ENCODE measurements at regions of chr10 and their contacts with region 1.

Region 1: GRCh38 chr10:103712570-103713498 is 142.5 kb downstream of the SH3PXD2A start:
- DNase-seq: peak; percentile 89
- ATAC-seq: peak; percentile 93
- H3K4me3 Mint-ChIP-seq: no peak overlapping the region
- H3K27ac Mint-ChIP-seq: no peak overlapping the region
- H3K4me1 Mint-ChIP-seq: no peaks in the 10 kb centered on the region
- H3K27me3 Mint-ChIP-seq: no peaks in the 10 kb centered on the region

Region 2: DNA sequence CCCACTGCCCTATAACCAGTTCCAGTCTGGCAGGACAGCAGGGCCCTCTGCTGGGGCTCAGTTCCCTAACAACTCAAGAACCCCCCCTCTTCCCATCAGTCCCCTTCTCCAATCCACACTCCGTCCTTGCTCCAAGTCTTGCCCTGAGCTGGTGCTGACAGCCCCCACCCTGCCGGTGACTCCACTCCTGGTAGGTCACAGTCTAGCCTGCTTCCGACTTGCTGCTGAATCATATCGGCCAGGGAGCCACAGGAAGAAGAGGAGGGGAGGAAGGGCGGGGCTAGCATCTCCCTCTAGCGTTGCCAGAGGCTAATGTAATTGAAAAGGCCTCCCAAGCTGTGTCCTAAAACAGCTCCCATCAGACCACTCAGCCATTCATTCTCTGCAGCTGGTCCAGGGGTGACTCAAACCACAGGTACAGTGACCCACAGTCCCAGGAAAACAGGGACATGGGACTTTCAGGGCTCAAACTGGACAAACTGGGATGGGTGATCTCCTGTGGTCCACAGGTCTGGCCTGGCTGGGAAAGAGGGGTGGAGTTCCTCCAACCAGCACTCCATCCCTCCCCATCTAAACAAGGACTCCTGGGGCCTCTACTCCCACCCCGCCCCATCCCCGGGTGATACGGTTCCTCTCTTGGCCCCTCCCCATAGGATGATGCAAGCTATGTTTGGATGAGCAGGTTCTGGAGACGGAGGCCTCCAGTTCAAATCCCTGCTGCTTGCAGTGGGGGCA is 16.3 kb before region 1 on chr10:
- CTCF ChIA-PET with region 1: interaction called, 12 read pairs
- POLR2A ChIA-PET with region 1: no interaction called
- intact Hi-C with region 1: no loop called
- DNase-seq: peak; percentile 90
- ATAC-seq: peak; percentile 94
- H3K4me3 Mint-ChIP-seq: peak overlapping the region; percentile 33
- H3K27ac Mint-ChIP-seq: peak overlapping the region; percentile 71
- H3K4me1 Mint-ChIP-seq: peaks cover 31% of the 10 kb centered on the region
- H3K27me3 Mint-ChIP-seq: peaks cover 2% of the 10 kb centered on the region

Region 3: GRCh38 chr10:103772096-103772845 is 59.4 kb after region 1 on chr10:
- CTCF ChIA-PET with region 1: interaction called, 10 read pairs
- POLR2A ChIA-PET with region 1: no interaction called
- intact Hi-C with region 1: loop called in 1 of 2 experiments (anchors 5 kb)
- DNase-seq: peak; percentile 77
- ATAC-seq: peak; percentile 87
- H3K4me3 Mint-ChIP-seq: peak overlapping the region; percentile 78
- H3K27ac Mint-ChIP-seq: peak overlapping the region; percentile 89
- H3K4me1 Mint-ChIP-seq: peaks cover 31% of the 10 kb centered on the region
- H3K27me3 Mint-ChIP-seq: no peaks in the 10 kb centered on the region

Region 4: DNA sequence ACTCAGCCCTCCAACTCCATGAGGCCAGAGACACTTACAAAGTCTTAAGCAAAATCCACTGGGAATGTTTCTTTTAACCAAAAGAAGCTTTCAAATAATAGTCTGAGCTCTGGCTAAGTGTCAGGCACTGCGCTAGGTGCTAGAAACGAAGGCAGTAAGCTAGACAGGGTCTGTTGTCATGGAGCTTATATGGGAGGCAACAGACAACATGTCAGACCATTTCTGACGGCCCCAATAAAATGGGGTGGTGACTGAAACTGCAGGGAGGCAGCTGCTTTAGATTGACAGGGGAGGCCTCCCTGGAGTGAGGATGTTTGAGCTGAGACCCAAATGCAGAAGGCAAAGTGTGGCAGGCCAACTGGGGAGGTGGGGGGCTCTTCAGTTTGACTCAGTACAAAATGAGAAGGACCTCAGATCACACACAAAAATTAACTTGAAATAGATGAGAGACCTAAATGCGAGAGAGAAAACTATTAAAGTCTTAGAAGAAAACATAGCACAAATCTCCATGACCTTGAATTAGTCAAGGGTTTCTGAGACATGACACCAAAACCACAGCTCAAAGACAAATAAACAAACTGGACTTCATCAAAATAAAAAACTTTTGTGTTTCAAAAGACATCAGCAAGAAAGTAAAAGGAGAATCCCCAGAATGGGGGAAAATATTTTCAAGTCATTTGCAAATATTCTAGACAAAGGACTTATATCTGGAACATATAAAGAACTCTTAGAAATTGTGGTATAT is 102.0 kb after region 1 on chr10:
- CTCF ChIA-PET with region 1: interaction called, 11 read pairs
- POLR2A ChIA-PET with region 1: interaction called, 5 read pairs
- intact Hi-C with region 1: no loop called
- DNase-seq: no peak
- ATAC-seq: no peak
- H3K4me3 Mint-ChIP-seq: no peak overlapping the region
- H3K27ac Mint-ChIP-seq: no peak overlapping the region
- H3K4me1 Mint-ChIP-seq: no peaks in the 10 kb centered on the region
- H3K27me3 Mint-ChIP-seq: peaks cover 9% of the 10 kb centered on the region

Region 5: GRCh38 chr10:103859161-103860086 is 146.6 kb after region 1 on chr10:
- CTCF ChIA-PET with region 1: interaction called, 35 read pairs
- POLR2A ChIA-PET with region 1: no interaction called
- intact Hi-C with region 1: loop called (anchors 1 kb)
- DNase-seq: peak; percentile 75
- ATAC-seq: peak; percentile 77
- H3K4me3 Mint-ChIP-seq: no peak overlapping the region
- H3K27ac Mint-ChIP-seq: no peak overlapping the region
- H3K4me1 Mint-ChIP-seq: peaks cover 6% of the 10 kb centered on the region
- H3K27me3 Mint-ChIP-seq: peaks cover 18% of the 10 kb centered on the region

Region 6: GRCh38 chr10:103888113-103888841 is 175.4 kb after region 1 on chr10:
- CTCF ChIA-PET with region 1: interaction called, 76 read pairs
- POLR2A ChIA-PET with region 1: no interaction called
- intact Hi-C with region 1: loop called (anchors 1 kb)
- DNase-seq: peak; percentile 57
- ATAC-seq: peak; percentile 82
- H3K4me3 Mint-ChIP-seq: no peak overlapping the region
- H3K27ac Mint-ChIP-seq: peak overlapping the region; percentile 83
- H3K4me1 Mint-ChIP-seq: peaks cover 35% of the 10 kb centered on the region
- H3K27me3 Mint-ChIP-seq: no peaks in the 10 kb centered on the region